Posterior cingulate gyrus (tissue), 11 donors: ENCODE measurements at regions of chrX and their contacts with region 1.

Region 1: DNA sequence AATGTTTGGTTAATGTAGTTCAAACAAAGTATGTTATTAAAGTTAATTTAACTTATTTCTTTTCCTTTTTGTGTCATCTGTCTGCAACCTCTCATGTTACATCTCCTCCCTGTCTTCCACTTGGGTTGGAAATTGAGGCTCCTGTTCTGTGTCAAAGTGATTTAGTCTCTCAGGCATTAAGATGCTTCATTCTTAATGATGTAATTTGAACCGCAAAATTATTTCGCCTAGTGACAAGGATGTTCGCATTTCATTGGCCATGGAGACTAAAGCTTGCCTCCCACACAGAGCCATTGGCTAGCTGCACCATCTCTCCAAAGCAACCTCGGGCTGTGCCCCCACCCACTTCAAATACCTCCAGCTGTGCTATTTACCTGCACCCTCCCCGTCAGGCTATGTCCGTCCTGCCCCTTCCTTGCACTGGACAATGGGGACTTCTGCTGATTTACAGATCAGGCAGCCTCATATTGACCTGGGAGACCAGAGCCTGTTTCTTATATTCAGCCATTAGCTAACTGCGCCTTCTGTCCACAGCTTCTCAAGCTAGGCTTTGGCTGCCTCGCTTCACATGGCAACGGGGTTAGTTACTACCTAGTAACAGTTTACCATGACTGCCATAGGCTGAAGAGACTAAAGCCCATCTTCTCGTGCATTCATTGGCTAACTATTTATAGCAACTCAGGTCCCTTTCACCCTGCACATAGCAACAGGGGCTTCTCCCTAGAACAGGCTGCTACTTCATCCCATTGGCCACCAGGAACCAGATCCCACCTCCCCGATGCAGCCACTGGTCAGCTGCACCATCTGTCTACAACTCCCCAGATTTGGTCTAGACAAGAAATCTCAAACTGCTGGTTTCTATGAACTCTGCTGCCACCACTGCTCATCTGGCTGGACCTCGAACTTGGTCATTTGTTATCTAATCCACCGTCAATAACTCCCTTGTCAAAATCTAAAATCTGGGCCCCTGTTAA is 8.6 kb upstream of the ZNF157 start:
- DNase-seq: peak; percentile 65 to 98 (median 80)

Region 2: GRCh38 chrX:47233337-47234113 is 128.3 kb before region 1 on chrX:
- intact Hi-C with region 1: loop called (anchors 10 kb)
- DNase-seq: peak; percentile 84 to 99 (median 90)

Region 3: GRCh38 chrX:47264483-47265173 is 97.2 kb before region 1 on chrX:
- intact Hi-C with region 1: no loop called
- DNase-seq: no peak